A549 (cell line): ENCODE measurements at regions of chr15 and their contacts with region 1.

Region 1: DNA sequence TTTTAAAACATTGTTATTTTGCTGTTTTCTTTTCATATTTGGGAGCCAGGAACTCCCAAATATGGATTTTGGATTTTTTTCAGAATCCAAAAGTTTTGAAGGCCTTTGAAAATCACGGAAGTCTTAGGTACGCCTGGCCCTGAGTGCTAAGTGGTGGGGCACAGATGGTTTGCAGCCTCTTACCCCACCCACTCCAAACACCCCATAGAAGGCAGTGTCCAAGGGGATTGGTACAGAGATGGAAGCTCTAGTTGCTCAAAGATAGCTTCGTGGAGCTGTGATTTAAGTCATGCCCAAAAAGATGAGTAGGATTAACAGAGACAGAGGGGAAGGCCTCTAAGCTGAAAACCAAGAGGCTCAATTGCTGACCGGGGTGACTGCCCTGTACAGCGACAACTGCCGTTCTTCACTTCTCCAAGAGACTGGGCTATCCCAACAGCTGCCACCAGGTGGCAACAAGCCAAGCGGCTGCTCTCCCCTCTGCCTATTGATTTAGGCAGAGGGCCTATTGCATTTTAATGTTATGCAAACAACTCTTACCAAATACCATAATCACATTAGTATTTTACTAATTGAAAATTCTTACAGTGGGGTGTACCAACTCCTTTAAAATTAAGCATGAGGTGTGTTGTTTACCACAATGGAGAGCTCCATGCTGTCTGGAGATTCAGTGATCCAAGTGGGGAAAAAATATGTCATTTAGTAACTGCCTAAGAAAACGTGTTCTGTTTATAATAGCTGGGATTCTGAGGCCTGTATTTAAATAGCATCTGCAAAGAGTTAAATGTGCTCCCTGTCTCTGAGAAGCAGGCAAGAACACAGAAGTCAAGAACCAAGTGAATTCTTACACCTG is 64.0 kb upstream of the C15orf61 start:
- DNase-seq: peak; percentile 75 to 81
- ATAC-seq: peak; percentile 96 to 99
- H3K4me3 ChIP-seq: no peak overlapping the region
- H3K27ac ChIP-seq: no peak overlapping the region
- H3K4me1 ChIP-seq: no peaks in the 10 kb centered on the region
- CTCF ChIP-seq: peak; percentile 94
- EP300 ChIP-seq: no peak
- POLR2A ChIP-seq: no peak
- RAD21 ChIP-seq: peak; percentile 76 to 81

Region 2: DNA sequence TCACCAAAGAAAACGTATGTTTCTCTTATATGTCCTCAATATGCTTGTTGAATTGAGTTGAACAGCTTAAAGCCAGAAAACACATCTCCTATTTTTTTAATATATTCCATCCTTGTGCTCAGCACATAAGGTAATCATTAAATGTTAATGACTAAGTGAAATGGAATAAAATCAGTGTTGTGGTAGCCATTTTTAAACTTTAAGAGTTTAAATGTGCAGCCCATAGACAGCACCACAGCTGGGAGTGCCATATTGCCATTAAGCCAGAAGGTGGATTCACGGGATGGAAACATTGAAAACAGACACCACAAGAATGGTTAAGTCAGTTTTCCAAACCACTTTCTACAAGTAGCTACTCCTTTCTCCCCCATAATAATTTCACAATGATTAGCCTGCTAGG is 12.8 kb before region 1 on chr15:
- CTCF ChIA-PET with region 1: interaction called, 63 read pairs
- POLR2A ChIA-PET with region 1: no interaction called
- DNase-seq: no peak
- ATAC-seq: no peak
- H3K4me3 ChIP-seq: no peak overlapping the region
- H3K27ac ChIP-seq: no peak overlapping the region
- H3K4me1 ChIP-seq: no peaks in the 10 kb centered on the region
- CTCF ChIP-seq: no peak
- EP300 ChIP-seq: no peak
- POLR2A ChIP-seq: no peak
- RAD21 ChIP-seq: no peak

Region 3: GRCh38 chr15:67481680-67482079 is 24.8 kb after region 1 on chr15:
- CTCF ChIA-PET with region 1: interaction called, 11 read pairs
- POLR2A ChIA-PET with region 1: no interaction called
- DNase-seq: no peak
- ATAC-seq: no peak
- H3K4me3 ChIP-seq: no peak overlapping the region
- H3K27ac ChIP-seq: no peak overlapping the region
- H3K4me1 ChIP-seq: no peaks in the 10 kb centered on the region
- CTCF ChIP-seq: no peak
- EP300 ChIP-seq: no peak
- POLR2A ChIP-seq: no peak
- RAD21 ChIP-seq: no peak

Region 4: GRCh38 chr15:67660874-67661606 is 204.1 kb after region 1 on chr15:
- CTCF ChIA-PET with region 1: no interaction called
- POLR2A ChIA-PET with region 1: no interaction called
- DNase-seq: no peak
- ATAC-seq: no peak
- H3K4me3 ChIP-seq: no peak overlapping the region
- H3K27ac ChIP-seq: no peak overlapping the region
- H3K4me1 ChIP-seq: no peaks in the 10 kb centered on the region
- CTCF ChIP-seq: no peak
- EP300 ChIP-seq: no peak
- POLR2A ChIP-seq: no peak
- RAD21 ChIP-seq: no peak

Region 5: GRCh38 chr15:67700023-67700422 is 243.1 kb after region 1 on chr15:
- CTCF ChIA-PET with region 1: no interaction called
- POLR2A ChIA-PET with region 1: no interaction called
- DNase-seq: no peak
- ATAC-seq: no peak
- H3K4me3 ChIP-seq: no peak overlapping the region
- H3K27ac ChIP-seq: no peak overlapping the region
- H3K4me1 ChIP-seq: no peaks in the 10 kb centered on the region
- CTCF ChIP-seq: no peak
- EP300 ChIP-seq: no peak
- POLR2A ChIP-seq: no peak
- RAD21 ChIP-seq: no peak

Region 6: DNA sequence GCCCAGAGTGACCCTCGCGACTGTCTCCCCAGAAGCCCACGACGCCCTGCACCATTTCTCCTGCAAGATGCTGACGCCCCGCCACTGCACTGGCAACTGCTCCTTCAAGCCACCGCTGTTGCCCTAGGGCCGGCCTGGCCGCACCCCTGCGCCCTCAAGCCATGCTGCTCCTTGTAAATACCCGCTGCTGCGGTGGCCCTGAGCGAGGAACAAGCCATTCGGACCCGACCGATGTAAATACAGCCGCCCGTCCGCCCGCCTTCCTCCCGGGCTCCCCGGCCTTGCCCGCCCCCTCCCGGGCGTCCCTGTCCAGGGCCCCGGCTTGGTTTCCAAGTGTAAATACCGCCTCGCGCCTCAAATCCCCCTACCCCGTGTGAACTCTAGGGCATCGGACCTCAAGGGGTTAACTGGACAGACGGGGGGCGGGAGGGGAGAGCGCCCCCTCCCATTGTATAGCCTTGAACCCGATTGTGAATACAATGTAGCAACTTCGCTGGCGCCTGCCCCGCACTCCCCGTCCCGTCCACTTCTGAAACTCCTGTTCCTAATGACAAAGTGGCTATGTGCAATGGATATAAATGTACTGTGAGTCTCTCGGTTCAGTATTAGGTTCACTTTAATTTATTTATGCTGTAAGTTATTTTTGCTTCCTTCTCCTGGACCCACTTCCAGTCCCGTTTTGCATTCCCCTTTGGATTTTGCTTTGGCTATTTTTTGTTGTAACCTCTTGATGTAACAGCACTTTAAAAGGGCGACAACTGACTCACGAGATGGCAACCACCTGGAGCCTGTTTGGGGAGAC is 377.0 kb after region 1 on chr15:
- CTCF ChIA-PET with region 1: interaction called, 67 read pairs
- POLR2A ChIA-PET with region 1: no interaction called
- DNase-seq: peak; percentile 48 to 75
- ATAC-seq: peak; percentile 47 to 77
- H3K4me3 ChIP-seq: peak overlapping the region; percentile 53
- H3K27ac ChIP-seq: peak overlapping the region; percentile 31 to 65; a peak in 4 of 6 replicates
- H3K4me1 ChIP-seq: peaks cover 14% of the 10 kb centered on the region
- CTCF ChIP-seq: peak; percentile 55
- EP300 ChIP-seq: no peak
- POLR2A ChIP-seq: no peak
- RAD21 ChIP-seq: peak; percentile 52 to 75